Body of pancreas (tissue), 4 donors: ENCODE measurements at regions of chr4 and their contacts with region 1.

Region 1: GRCh38 chr4:1249731-1250526 is 999 bp upstream of the CTBP1 start:
- DNase-seq: peak; percentile 46 to 54 (median 51)
- ATAC-seq: no peak
- H3K4me3 ChIP-seq: peak overlapping the region; percentile 25 to 32
- H3K27ac ChIP-seq: peak overlapping the region; percentile 93 to 99 (median 98)
- H3K4me1 ChIP-seq: peaks cover 46% of the 10 kb centered on the region
- H3K27me3 ChIP-seq: no peaks in the 10 kb centered on the region
- CTCF ChIP-seq: no peak
- POLR2A ChIP-seq: peak in 2 of 3 donors; percentile 41 to 47

Region 2: GRCh38 chr4:1192091-1192492 is 57.8 kb before region 1 on chr4:
- intact Hi-C with region 1: no loop called
- DNase-seq: peak; percentile 92 to 96 (median 95)
- ATAC-seq: peak; percentile 99
- H3K4me3 ChIP-seq: no peak overlapping the region
- H3K27ac ChIP-seq: peak overlapping the region; percentile 78 to 92 (median 86)
- H3K4me1 ChIP-seq: peaks cover 31% of the 10 kb centered on the region
- H3K27me3 ChIP-seq: no peaks in the 10 kb centered on the region
- CTCF ChIP-seq: peak in 1 of 7 experiments; percentile 2
- POLR2A ChIP-seq: no peak

Region 3: DNA sequence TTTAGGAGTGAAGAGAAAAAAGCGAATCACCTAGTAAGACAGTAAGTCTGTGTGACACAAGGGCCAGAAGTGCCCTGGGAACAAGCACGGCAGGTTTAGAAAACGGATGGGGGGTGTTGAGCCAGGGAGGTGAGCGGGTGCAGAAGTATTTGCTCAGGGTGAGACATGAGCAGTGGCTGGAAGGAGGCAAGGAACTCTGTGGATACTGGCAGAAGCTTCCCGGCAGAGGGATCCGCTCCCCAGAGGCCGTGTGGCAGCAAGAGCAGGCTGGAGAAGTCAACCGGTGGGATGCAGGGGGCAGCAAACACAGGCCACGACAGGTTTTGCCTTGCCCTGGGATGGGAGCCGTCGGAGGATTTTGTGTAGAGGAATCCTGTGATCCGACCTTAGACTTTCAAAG is 94.8 kb after region 1 on chr4:
- intact Hi-C with region 1: loop called (anchors 5 kb)
- DNase-seq: no peak
- ATAC-seq: no peak
- H3K4me3 ChIP-seq: no peak overlapping the region
- H3K27ac ChIP-seq: no peak overlapping the region
- H3K4me1 ChIP-seq: peaks cover 29% of the 10 kb centered on the region
- H3K27me3 ChIP-seq: no peaks in the 10 kb centered on the region
- CTCF ChIP-seq: no peak
- POLR2A ChIP-seq: no peak